ENCODE measurements at regions of chr2 and their contacts with region 1.

Region 1: DNA sequence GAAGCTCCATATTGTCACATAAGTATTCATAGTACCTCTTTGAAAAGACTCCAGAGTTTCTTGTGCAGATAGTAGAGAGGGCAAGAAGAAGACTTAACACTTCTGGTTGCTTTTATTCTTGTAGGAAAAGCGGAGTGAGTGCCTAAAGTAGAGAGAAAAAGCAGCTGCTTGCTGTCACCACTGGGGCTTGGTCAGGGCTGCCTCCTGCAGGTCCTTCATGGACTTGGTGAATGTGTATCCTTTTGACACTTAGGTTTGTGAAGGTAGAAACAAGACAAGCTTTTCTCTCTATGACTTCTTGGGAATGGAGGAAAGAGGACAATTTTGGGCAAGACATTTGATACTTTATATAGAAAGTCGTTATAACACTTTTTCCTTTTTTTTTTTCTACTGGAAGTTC is 312.8 kb upstream of the FANCL start:
- DNase-seq: no peak
- H3K4me3 ChIP-seq: no peak overlapping the region
- H3K27ac ChIP-seq: no peak overlapping the region
- H3K4me1 ChIP-seq: no peaks in the 10 kb centered on the region
- H3K27me3 ChIP-seq: no peaks in the 10 kb centered on the region
- CTCF ChIP-seq: no peak
- EP300 ChIP-seq: no peak
- POLR2A ChIP-seq: no peak

Region 2: DNA sequence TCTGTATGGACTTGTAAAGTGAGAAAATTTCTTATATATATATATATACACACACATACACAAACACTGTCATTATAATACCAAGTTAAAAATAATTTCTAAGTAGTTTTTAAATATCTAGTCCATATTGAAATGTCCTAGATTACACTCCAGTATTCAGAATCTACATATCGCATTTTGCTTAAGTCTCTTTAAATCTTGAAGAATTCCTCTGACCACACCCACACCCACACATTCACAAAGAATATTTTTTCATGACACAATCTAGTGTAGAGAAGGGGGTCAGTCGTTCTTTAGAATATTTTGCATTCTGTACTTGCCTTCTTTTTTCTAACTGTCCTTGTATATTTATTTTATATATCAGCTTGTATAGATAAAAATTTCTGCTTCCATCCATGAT is 1860.4 kb before region 1 on chr2:
- intact Hi-C with region 1: loop called in 1 of 4 experiments (anchors 5 kb)
- DNase-seq: no peak
- H3K4me3 ChIP-seq: no peak overlapping the region
- H3K27ac ChIP-seq: no peak overlapping the region
- H3K4me1 ChIP-seq: no peaks in the 10 kb centered on the region
- H3K27me3 ChIP-seq: no peaks in the 10 kb centered on the region
- CTCF ChIP-seq: no peak
- EP300 ChIP-seq: no peak
- POLR2A ChIP-seq: no peak